PC-3 (cell line): ENCODE measurements at regions of chr1 and their contacts with region 1.

Region 1: DNA sequence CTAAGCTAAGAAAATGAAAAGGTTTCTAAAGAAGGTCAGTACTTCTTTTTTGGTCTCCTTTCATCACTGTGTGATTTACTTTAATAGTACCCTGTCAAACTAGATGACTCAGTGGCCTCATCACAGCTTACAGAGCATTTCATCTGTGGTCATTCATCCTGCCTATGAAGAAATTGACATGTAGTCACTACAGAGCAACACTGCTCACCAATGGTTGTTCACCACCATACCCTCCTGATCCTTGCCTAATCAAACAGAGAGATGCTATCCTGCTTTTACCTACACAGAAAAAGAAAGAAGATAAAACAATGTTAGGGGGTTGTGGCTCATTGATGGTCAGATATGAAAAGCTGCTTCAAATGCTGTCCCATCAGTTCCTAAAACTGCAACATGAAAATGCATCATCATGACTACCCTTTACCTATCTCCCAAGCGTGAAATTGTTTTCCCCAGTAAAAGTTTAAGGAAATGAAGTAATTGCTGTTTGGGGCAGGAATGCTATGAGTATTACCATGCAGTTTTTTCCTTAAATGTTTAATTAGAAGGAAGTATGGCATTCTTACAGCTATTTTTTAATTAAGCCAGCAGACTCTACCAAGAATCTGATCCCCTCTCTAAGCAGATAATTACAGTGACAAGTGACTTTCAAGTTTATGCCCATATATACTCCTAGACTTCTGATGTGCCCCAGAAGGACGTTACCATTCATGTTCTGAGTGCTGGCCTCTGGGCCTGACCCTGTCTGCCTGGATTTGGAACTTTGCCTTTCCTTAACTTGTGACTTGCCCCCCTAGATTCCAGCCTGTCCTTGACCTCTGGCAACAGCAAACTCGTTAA is 46.1 kb upstream of the FBXO28 start:
- DNase-seq: peak; percentile 97
- ATAC-seq: peak; percentile 73
- H3K4me3 ChIP-seq: no peak overlapping the region
- H3K27ac ChIP-seq: peak overlapping the region; percentile 83
- H3K4me1 ChIP-seq: peaks cover 64% of the 10 kb centered on the region
- H3K27me3 ChIP-seq: no peaks in the 10 kb centered on the region
- CTCF ChIP-seq: no peak

Region 2: GRCh38 chr1:224057461-224058199 is 10.2 kb before region 1 on chr1:
- CTCF ChIA-PET with region 1: no interaction called
- POLR2A ChIA-PET with region 1: no interaction called
- intact Hi-C with region 1: no loop called
- DNase-seq: peak; percentile 62
- ATAC-seq: peak; percentile 28
- H3K4me3 ChIP-seq: no peak overlapping the region
- H3K27ac ChIP-seq: peak overlapping the region; percentile 75
- H3K4me1 ChIP-seq: peaks cover 40% of the 10 kb centered on the region
- H3K27me3 ChIP-seq: no peaks in the 10 kb centered on the region
- CTCF ChIP-seq: no peak

Region 3: GRCh38 chr1:224087286-224087794 is 19.5 kb after region 1 on chr1:
- CTCF ChIA-PET with region 1: no interaction called
- POLR2A ChIA-PET with region 1: no interaction called
- intact Hi-C with region 1: loop called (anchors 2 kb)
- DNase-seq: peak; percentile 61
- ATAC-seq: peak; percentile 90
- H3K4me3 ChIP-seq: no peak overlapping the region
- H3K27ac ChIP-seq: peak overlapping the region; percentile 47
- H3K4me1 ChIP-seq: peaks cover 17% of the 10 kb centered on the region
- H3K27me3 ChIP-seq: no peaks in the 10 kb centered on the region
- CTCF ChIP-seq: no peak